Colonic mucosa (tissue), 4 donors: ENCODE measurements at regions of chr9 and their contacts with region 1.

Region 1: GRCh38 chr9:125143375-125144090 is at the start of gene SCAI:
- DNase-seq: peak; percentile 99
- H3K4me3 ChIP-seq: peak within 1 kb of the TSS; percentile 62
- H3K27ac ChIP-seq: no peak within 1 kb of the TSS
- H3K4me1 ChIP-seq: no peaks in the 10 kb centered on the region
- H3K27me3 ChIP-seq: no peaks in the 10 kb centered on the region
- CTCF ChIP-seq: peak; percentile 99
- total RNA-seq, gene SCAI: 6.7 to 8.3 TPM

Region 2: DNA sequence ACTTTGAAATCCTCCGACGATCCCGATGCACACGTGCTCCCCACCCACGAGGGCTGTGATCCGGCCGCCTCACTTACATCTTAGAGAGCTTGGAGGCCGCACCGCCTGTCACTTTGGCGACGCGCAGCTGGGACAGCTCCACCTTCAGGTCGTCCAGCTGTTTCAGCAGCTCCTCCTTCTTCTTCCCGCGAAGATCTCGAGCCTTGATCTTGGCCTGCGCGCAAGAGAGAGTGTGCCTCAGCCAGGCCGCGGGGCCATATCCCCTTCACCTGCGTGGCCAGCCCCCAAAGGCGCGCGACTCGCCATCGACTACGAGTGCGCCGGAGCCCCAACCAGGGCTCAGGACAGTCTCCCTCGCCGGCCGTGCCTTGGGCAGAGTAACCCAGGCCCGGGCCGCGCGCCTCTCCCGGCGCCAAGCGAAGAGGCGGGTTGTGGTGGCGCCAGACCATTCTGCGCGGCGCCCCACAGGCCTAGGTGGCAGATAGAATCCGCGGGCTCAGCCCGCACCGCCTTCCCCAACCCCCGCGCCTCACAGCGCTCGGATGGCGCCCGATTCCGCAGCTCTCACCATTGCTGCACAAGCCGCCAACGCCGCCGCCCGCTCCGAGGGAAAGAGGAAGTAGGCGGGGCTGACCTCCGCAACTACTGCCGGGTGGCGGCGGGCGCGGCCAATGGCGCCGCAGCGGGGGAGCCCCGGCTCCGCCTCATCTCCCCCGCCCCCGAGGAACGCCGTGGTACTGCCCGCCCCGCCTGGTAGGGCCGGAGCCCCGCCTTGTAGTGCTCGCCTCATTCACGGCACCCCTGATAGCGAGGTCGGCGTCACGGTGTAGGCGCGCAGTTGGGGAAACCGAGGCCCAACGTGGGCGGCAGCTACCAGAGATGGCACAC is 281.9 kb before region 1 on chr9 and contains the starts of genes ARPC5L and RPL35:
- intact Hi-C with region 1: loop called (anchors 2 kb)
- DNase-seq: peak; percentile 96
- H3K4me3 ChIP-seq: peak within 1 kb of the TSS; percentile 77
- H3K27ac ChIP-seq: peak within 1 kb of the TSS; percentile 81
- H3K4me1 ChIP-seq: peaks cover 18% of the 10 kb centered on the region
- H3K27me3 ChIP-seq: no peaks in the 10 kb centered on the region
- CTCF ChIP-seq: peak; percentile 20
- total RNA-seq, gene ARPC5L: 50.0 to 61.5 TPM
- total RNA-seq, gene RPL35: 890 to 1,374 TPM

Region 3: GRCh38 chr9:124939944-124940343 is 203.6 kb before region 1 on chr9:
- intact Hi-C with region 1: loop called (anchors 5 kb)
- DNase-seq: no peak
- H3K4me3 ChIP-seq: peak overlapping the region; percentile 58
- H3K27ac ChIP-seq: peak overlapping the region; percentile 98
- H3K4me1 ChIP-seq: no peaks in the 10 kb centered on the region
- H3K27me3 ChIP-seq: no peaks in the 10 kb centered on the region
- CTCF ChIP-seq: no peak